Spleen (tissue), 13 donors: ENCODE measurements at regions of chr3 and their contacts with region 1.

Region 1: DNA sequence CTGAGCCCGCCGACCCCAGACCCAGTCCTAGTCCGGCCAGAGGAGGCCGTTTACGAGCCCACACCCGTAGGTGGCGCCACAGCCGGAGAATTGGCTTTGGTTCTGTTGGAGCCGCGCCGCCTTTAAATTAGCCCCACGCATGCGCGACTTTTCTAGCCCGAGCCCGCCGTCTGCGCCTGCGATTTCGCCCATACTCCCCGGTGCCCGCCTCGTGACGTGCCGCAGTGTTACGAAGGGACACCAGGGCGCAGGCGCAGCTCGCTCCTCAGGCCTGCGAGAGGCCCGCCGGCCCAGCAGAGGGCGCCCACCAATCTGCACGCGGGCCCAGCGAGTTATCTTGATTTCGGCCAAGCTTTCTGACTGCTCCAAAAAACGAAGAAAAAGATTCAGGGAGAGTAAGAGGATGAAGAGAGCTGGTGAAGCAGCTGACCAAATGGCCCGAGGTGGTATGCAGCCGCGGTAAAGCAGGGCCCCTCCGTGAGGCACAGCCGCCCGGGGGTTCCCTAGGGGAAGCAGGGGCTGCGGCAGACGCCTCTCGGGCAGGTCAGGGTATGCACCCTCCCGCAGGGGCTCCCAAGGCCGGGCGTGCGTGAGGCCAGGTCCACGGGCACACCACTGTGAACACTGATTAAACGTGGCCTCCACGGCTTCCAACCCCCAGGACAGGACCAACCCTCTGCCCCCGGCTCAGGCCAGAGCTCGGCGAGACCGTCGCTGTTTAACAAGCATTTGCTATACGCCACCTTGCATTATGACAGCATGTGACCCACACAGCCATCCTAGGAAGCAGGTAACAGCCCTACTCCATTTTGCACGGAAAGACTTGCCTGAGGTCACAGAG is 32.8 kb downstream of the RPN1 start:
- DNase-seq: peak; percentile 100
- H3K4me3 ChIP-seq: peak overlapping the region; percentile 51 to 88 (median 78)
- H3K27ac ChIP-seq: peak overlapping the region; percentile 66 to 95 (median 91)
- H3K4me1 ChIP-seq: peaks cover 20 to 59% (median 42%) of the 10 kb centered on the region in 6 donors
- H3K27me3 ChIP-seq: no peaks in the 10 kb centered on the region
- CTCF ChIP-seq: peak; percentile 97 to 100 (median 99)
- POLR2A ChIP-seq: peak in 1 of 3 donors; percentile 56

Region 2: GRCh38 chr3:128650096-128651050 is 32.6 kb after region 1 on chr3 and contains the start of gene RPN1:
- intact Hi-C with region 1: loop called (anchors 5 kb)
- DNase-seq: peak; percentile 100
- H3K4me3 ChIP-seq: peak within 1 kb of the TSS; percentile 77 to 100 (median 95)
- H3K27ac ChIP-seq: peak within 1 kb of the TSS; percentile 68 to 99 (median 96)
- H3K4me1 ChIP-seq: peaks cover 9 to 86% (median 44%) of the 10 kb centered on the region in 6 donors
- H3K27me3 ChIP-seq: no peaks in the 10 kb centered on the region
- CTCF ChIP-seq: peak in 2 of 11 experiments; percentile 18 to 30
- POLR2A ChIP-seq: peak; percentile 50 to 69 (median 65)
- total RNA-seq, gene RPN1: 128 to 263 (median 190) TPM

Region 3: DNA sequence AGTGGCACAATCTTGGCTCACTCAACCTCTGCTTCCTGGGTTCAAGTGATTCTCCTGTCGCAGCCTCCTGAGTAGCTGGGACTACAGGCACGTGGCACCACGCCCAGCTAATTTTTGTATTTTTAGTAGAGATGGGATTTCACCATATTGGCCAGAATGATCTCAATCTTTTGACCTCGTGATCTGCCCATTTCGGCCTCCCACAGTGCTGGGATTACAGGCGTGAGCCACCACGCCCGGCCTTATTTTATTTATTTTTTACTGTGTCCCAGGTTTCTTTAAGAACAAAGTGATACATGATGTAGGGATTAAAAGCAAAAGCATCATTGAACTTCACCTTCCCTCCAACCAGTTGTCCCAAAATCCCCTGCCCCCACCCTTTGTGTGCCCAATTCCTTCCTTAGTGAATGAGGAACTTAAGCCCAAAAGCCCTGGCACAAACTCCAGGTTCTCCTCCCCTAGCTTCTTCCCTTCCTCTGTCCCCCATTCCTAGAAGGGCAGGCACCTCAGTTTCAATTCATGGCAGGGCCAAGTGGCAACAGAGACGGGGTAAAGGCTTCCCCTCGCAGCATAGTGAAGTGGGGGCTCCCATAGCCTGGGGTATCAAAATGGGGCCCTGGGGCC is 56.5 kb after region 1 on chr3:
- intact Hi-C with region 1: no loop called
- DNase-seq: no peak
- H3K4me3 ChIP-seq: peak overlapping the region in 2 of 8 donors; percentile 3 to 31
- H3K27ac ChIP-seq: peak overlapping the region in 7 of 8 donors; percentile 7 to 70 (median 40)
- H3K4me1 ChIP-seq: peaks cover 0 to 21% (median 11%) of the 10 kb centered on the region in 6 donors
- H3K27me3 ChIP-seq: no peaks in the 10 kb centered on the region
- CTCF ChIP-seq: no peak
- POLR2A ChIP-seq: no peak